CD14-positive monocyte (primary cell): ENCODE measurements at regions of chr1 and their contacts with region 1.

Region 1: DNA sequence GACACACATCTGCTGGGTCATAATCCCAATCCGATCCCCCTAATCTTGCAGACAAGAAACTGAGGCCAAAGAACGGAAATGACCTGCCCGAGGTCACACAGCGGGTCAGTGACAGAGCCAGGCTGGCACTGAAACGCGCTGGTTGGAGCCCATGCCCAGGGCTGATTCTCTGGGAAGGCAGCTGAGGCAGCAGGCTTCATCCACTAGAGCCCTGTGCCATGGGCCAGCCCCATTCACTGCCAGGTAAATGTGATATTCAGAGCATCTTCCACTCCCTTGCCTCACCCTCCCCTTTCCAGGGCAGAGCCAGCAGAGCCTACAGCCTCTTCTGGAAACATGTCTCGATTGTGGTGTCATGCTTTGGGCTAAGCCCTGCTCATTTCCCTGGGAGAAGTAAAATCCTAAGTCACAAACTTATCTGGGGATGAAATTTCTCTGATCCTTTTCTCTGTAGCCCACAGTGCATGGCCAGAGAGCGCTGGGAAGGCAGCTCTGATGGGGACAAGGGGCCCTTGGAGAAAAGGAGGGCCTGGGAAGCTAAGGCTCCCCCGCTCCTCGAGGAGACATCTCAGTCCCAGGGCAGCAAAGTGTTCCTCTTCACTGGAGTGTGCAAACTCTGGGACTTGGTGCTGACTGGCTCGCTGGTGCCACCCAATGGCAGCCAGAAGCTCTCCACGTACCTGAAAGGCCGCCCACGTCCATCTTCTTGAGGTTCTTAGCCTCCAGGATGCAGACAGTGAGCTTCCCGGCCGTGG is 110.4 kb downstream of the SYT2 start:
- DNase-seq: peak; percentile 15 to 42 (median 37)
- H3K4me3 ChIP-seq: no peak overlapping the region
- H3K4me3 Mint-ChIP-seq: peak overlapping the region in 1 of 2 donors; percentile 84
- H3K27ac ChIP-seq: no peak overlapping the region
- H3K27ac Mint-ChIP-seq: no peak overlapping the region
- H3K4me1 ChIP-seq: peaks cover 9 to 13% of the 10 kb centered on the region in 2 donors
- H3K4me1 Mint-ChIP-seq: peaks cover 18% of the 10 kb centered on the region
- H3K27me3 ChIP-seq: peaks cover 74 to 98% of the 10 kb centered on the region in 2 donors
- H3K27me3 Mint-ChIP-seq: peaks cover 94 to 98% (median 96%) of the 10 kb centered on the region in 3 donors
- CTCF ChIP-seq: peak; percentile 62

Region 2: GRCh38 chr1:202565890-202566602 is 33.8 kb before region 1 on chr1:
- intact Hi-C with region 1: no loop called
- DNase-seq: no peak
- H3K4me3 ChIP-seq: no peak overlapping the region
- H3K4me3 Mint-ChIP-seq: no peak overlapping the region
- H3K27ac ChIP-seq: no peak overlapping the region
- H3K27ac Mint-ChIP-seq: no peak overlapping the region
- H3K4me1 ChIP-seq: no peaks in the 10 kb centered on the region
- H3K4me1 Mint-ChIP-seq: no peaks in the 10 kb centered on the region
- H3K27me3 ChIP-seq: peaks cover 0 to 3% of the 10 kb centered on the region in 2 donors
- H3K27me3 Mint-ChIP-seq: peaks cover 4 to 26% (median 12%) of the 10 kb centered on the region in 3 donors
- CTCF ChIP-seq: no peak

Region 3: GRCh38 chr1:202643397-202644218 is 43.8 kb after region 1 on chr1:
- intact Hi-C with region 1: loop called in 1 of 2 experiments (anchors 10 kb)
- DNase-seq: no peak
- H3K4me3 ChIP-seq: no peak overlapping the region
- H3K4me3 Mint-ChIP-seq: peak overlapping the region in 1 of 2 donors; percentile 71
- H3K27ac ChIP-seq: no peak overlapping the region
- H3K27ac Mint-ChIP-seq: no peak overlapping the region
- H3K4me1 ChIP-seq: no peaks in the 10 kb centered on the region
- H3K4me1 Mint-ChIP-seq: peaks cover 17% of the 10 kb centered on the region
- H3K27me3 ChIP-seq: peaks cover 93 to 98% of the 10 kb centered on the region in 2 donors
- H3K27me3 Mint-ChIP-seq: peaks cover 97 to 100% (median 97%) of the 10 kb centered on the region in 3 donors
- CTCF ChIP-seq: no peak

Region 4: GRCh38 chr1:202770135-202770534 is 170.3 kb after region 1 on chr1:
- intact Hi-C with region 1: no loop called
- DNase-seq: no peak
- H3K4me3 ChIP-seq: no peak overlapping the region
- H3K4me3 Mint-ChIP-seq: no peak overlapping the region
- H3K27ac ChIP-seq: no peak overlapping the region
- H3K27ac Mint-ChIP-seq: no peak overlapping the region
- H3K4me1 ChIP-seq: no peaks in the 10 kb centered on the region
- H3K4me1 Mint-ChIP-seq: no peaks in the 10 kb centered on the region
- H3K27me3 ChIP-seq: no peaks in the 10 kb centered on the region
- H3K27me3 Mint-ChIP-seq: no peaks in the 10 kb centered on the region
- CTCF ChIP-seq: no peak